Activated CD4-positive, alpha-beta T cell treated with anti-CD3 and anti-CD28 coated beads for 36 hours (primary cell): ENCODE measurements at regions of chr11 and their contacts with region 1.

Region 1: GRCh38 chr11:128831174-128832120 is 35.6 kb downstream of the KCNJ1 start:
- DNase-seq: peak; percentile 93
- ATAC-seq: peak; percentile 81
- H3K4me3 Mint-ChIP-seq: peak overlapping the region; percentile 57
- H3K27ac Mint-ChIP-seq: peak overlapping the region; percentile 93
- H3K4me1 Mint-ChIP-seq: peaks cover 21% of the 10 kb centered on the region
- H3K27me3 Mint-ChIP-seq: no peaks in the 10 kb centered on the region

Region 2: DNA sequence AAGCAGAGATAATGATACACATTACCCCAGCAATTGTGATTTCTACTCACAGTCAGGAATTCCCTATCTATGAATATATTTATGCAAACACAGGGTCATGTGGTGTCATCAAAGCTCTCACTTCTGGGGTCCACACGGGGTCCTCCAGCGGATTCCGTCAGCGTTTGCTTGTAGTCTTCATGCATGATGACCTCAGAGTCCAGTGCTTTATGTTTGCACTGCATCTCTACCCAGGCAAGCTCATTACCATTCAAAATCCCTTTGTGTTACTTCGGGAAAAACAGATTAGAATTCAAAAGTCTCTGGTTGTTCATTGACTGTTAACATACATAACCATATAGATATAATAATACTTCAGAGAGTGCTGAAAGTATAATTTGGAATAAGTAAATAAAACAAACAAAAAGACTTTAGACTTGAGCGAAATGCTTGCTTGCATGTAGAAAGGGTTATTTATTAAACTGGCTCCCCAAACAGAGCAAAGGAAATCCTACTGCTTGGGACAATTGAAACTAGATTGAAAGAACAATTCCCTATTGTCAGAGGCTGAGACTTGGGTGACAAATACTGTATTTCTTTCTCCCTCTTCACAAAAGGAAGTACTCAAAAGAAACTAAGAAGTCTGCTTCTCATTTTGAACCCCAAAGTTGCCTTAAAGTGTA is 667.2 kb before region 1 on chr11:
- CTCF ChIA-PET with region 1: interaction called, 64 read pairs
- POLR2A ChIA-PET with region 1: no interaction called
- intact Hi-C with region 1: no loop called
- DNase-seq: no peak
- ATAC-seq: no peak
- H3K4me3 Mint-ChIP-seq: no peak overlapping the region
- H3K27ac Mint-ChIP-seq: no peak overlapping the region
- H3K4me1 Mint-ChIP-seq: peaks cover 6% of the 10 kb centered on the region
- H3K27me3 Mint-ChIP-seq: peaks cover 5% of the 10 kb centered on the region

Region 3: GRCh38 chr11:128506999-128507611 is 324.3 kb before region 1 on chr11:
- CTCF ChIA-PET with region 1: interaction called, 3 read pairs
- POLR2A ChIA-PET with region 1: no interaction called
- intact Hi-C with region 1: loop called in 1 of 2 experiments (anchors 5 kb)
- DNase-seq: peak; percentile 80
- ATAC-seq: peak; percentile 58
- H3K4me3 Mint-ChIP-seq: peak overlapping the region; percentile 96
- H3K27ac Mint-ChIP-seq: peak overlapping the region; percentile 98
- H3K4me1 Mint-ChIP-seq: peaks cover 89% of the 10 kb centered on the region
- H3K27me3 Mint-ChIP-seq: no peaks in the 10 kb centered on the region

Region 4: DNA sequence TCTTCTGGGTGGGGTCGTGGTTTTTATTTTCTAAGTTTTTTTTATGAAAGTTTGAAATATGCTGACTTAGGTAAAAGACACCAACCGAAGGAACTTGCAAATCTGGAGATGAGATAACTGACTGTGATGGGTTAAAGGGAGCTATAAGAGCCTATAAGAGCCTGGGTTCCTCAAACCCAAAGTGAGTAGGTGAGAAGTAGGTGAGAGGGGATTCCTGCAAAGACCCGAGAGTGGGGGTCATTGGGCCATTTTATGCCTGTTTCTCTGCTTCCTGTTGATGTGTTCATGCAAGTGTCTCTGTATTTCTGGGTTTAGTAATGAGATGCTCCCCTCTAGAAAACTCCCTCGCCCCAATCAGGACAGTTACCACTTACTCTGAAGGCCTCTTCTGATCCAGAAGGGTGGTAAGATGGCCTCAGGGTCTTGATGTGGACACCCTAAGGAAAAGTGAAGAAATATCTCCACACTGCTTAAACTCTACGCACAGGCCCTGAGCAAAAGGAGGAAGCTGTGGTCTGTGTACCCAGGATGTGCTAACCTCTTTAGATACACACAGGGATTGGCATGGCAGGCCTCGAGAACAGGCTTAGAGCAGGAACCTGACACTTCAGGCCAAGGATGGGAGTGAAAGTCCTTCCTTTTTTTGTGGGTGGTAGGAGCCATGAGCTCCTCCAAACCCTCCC is 135.8 kb before region 1 on chr11:
- CTCF ChIA-PET with region 1: interaction called, 3 read pairs
- POLR2A ChIA-PET with region 1: no interaction called
- intact Hi-C with region 1: loop called in 1 of 2 experiments (anchors 5 kb)
- DNase-seq: peak; percentile 49
- ATAC-seq: peak; percentile 24
- H3K4me3 Mint-ChIP-seq: peak overlapping the region; percentile 90
- H3K27ac Mint-ChIP-seq: peak overlapping the region; percentile 94
- H3K4me1 Mint-ChIP-seq: peaks cover 58% of the 10 kb centered on the region
- H3K27me3 Mint-ChIP-seq: peaks cover 9% of the 10 kb centered on the region

Region 5: DNA sequence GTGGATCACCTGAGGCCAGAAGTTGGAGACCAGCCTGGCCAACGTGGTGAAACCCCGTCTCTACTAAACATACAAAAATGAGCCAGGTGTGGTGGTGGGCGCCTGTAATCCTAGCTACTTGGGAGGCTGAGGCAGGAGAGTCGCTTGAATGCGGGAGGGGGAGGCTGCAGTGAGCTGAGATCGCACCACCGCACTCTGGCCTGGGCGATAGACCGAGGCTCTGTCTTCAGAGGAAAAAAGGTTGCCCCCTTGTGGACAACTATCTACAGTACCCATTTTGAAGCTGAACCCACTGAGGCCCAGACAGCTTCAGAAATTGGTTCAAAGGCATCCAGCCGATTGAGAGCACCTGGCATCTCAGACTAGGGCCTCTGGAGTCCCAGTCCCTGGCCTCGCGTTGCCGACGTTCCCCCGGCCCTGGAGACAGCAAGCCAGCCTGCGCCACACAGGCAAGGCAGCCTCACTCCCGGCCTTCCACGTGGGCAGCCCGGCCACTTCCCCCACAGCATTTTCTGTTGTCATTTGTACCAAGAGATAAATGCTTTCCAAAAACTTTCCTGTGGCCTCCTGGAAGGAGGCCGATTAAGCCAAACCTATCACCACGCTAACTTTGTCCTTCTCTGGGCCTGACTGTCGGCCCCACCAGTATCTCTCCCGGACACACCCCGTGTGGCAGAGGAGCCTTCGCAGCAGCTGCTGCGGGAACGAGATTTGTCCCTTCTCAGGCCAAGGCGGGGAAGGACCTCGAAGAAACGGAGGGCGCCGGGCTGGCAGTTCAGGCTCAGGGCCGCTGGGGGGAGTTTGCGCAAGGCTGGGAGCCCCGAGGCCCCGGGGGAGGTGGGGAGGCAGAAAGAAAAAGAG is 54.8 kb before region 1 on chr11:
- CTCF ChIA-PET with region 1: interaction called, 12 read pairs
- POLR2A ChIA-PET with region 1: no interaction called
- intact Hi-C with region 1: loop called in 1 of 2 experiments (anchors 2 kb)
- DNase-seq: peak; percentile 59
- ATAC-seq: peak; percentile 74
- H3K4me3 Mint-ChIP-seq: no peak overlapping the region
- H3K27ac Mint-ChIP-seq: peak overlapping the region; percentile 43
- H3K4me1 Mint-ChIP-seq: peaks cover 47% of the 10 kb centered on the region
- H3K27me3 Mint-ChIP-seq: no peaks in the 10 kb centered on the region

Region 6: GRCh38 chr11:128859563-128860441 is 28.4 kb after region 1 on chr11:
- CTCF ChIA-PET with region 1: interaction called, 10 read pairs
- POLR2A ChIA-PET with region 1: no interaction called
- intact Hi-C with region 1: no loop called
- DNase-seq: peak; percentile 89
- ATAC-seq: peak; percentile 96
- H3K4me3 Mint-ChIP-seq: no peak overlapping the region
- H3K27ac Mint-ChIP-seq: no peak overlapping the region
- H3K4me1 Mint-ChIP-seq: peaks cover 4% of the 10 kb centered on the region
- H3K27me3 Mint-ChIP-seq: no peaks in the 10 kb centered on the region

Region 7: GRCh38 chr11:129458756-129459535 is 627.5 kb after region 1 on chr11:
- CTCF ChIA-PET with region 1: no interaction called
- POLR2A ChIA-PET with region 1: no interaction called
- intact Hi-C with region 1: no loop called
- DNase-seq: no peak
- ATAC-seq: no peak
- H3K4me3 Mint-ChIP-seq: no peak overlapping the region
- H3K27ac Mint-ChIP-seq: no peak overlapping the region
- H3K4me1 Mint-ChIP-seq: no peaks in the 10 kb centered on the region
- H3K27me3 Mint-ChIP-seq: peaks cover 11% of the 10 kb centered on the region